GM12878 (cell line): ENCODE measurements at regions of chr6 and their contacts with region 1.

Region 1: GRCh38 chr6:111804627-111805235 is 68.5 kb downstream of the FYN start:
- DNase-seq: peak; percentile 84
- ATAC-seq: peak; percentile 77
- H3K4me3 ChIP-seq: no peak overlapping the region
- H3K27ac ChIP-seq: peak overlapping the region; percentile 70
- H3K4me1 ChIP-seq: peaks cover 70% of the 10 kb centered on the region
- H3K27me3 ChIP-seq: no peaks in the 10 kb centered on the region
- CTCF ChIP-seq: peak in 2 of 3 experiments; percentile 24 to 35; a peak in 2 of 6 replicates
- EP300 ChIP-seq: peak; percentile 65 to 88; a peak in 2 of 4 replicates
- POLR2A ChIP-seq: no peak
- RAD21 ChIP-seq: peak; percentile 62

Region 2: DNA sequence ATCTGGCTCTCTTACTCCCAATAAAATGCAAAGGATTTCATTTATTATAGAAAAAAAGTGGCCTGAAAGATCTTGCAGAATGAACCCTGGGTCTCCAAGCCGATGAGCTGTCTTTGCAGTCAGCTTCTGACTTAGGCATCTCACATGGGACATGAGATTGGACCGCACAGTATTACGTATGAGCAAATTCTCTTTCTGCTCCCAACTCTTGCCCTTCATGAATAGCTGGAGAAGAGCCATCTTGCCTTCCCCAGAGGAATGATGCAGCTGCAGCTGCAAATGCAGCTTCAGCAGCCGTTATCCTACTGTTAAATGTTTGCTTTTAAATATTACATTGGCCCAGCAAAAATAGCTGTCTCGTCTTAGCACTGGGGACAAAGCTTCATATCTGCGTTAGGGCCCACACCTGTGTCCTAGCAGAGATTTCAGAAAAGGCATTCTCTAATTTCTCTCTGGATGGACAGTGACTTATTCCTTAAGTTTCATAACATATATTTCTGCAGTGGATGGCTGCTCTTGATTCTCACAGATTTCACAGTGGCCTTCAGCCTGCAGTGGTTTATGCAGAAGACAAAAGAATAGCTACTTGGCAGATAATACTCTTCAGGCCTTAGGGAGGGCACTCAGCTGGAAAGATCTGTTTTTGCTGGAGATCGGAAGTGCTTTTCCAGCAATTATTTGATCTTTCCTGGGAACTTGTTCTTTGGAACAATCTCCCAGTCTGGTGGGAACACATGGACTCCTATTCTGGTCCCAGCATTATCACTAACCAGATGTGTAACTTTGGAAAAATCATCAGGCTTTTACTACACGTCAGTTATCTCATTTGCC is 60.7 kb before region 1 on chr6:
- CTCF ChIA-PET with region 1: interaction called, 6 read pairs
- POLR2A ChIA-PET with region 1: interaction called, 3 read pairs
- RAD21 ChIA-PET with region 1: interaction called, 15 read pairs
- SMC1A ChIA-PET with region 1: interaction called, 9 read pairs
- in situ Hi-C with region 1: no loop called
- intact Hi-C with region 1: loop called (anchors 1 kb)
- DNase-seq: no peak
- ATAC-seq: no peak
- H3K4me3 ChIP-seq: no peak overlapping the region
- H3K27ac ChIP-seq: no peak overlapping the region
- H3K4me1 ChIP-seq: peaks cover 58% of the 10 kb centered on the region
- H3K27me3 ChIP-seq: no peaks in the 10 kb centered on the region
- CTCF ChIP-seq: no peak
- EP300 ChIP-seq: no peak
- POLR2A ChIP-seq: no peak
- RAD21 ChIP-seq: no peak

Region 3: DNA sequence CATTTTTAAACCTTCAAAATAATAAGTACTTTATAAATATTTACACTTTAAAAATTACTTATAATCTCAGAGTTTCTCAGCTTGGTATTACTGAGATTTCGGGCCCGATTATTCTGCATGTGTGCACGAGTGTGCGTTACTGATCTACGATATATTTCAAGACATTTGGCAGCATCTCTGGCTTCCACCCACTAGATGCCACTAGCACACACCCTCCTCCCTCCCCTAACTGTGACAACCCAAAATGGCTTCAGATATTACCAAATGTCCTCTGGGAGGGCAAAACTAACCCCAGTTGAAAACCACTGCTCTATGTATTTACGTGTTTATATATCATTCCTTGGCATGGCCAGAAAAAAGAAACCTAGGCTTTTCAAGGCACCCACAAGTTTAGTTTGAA is 27.4 kb before region 1 on chr6:
- CTCF ChIA-PET with region 1: interaction called, 11 read pairs
- POLR2A ChIA-PET with region 1: interaction called, 5 read pairs
- RAD21 ChIA-PET with region 1: interaction called, 10 read pairs
- SMC1A ChIA-PET with region 1: interaction called, 27 read pairs
- in situ Hi-C with region 1: no loop called
- intact Hi-C with region 1: no loop called
- DNase-seq: no peak
- ATAC-seq: peak; percentile 82
- H3K4me3 ChIP-seq: no peak overlapping the region
- H3K27ac ChIP-seq: peak overlapping the region; percentile 61
- H3K4me1 ChIP-seq: peaks cover 22% of the 10 kb centered on the region
- H3K27me3 ChIP-seq: no peaks in the 10 kb centered on the region
- CTCF ChIP-seq: peak; percentile 39 to 50 (median 43); a peak in 4 of 6 replicates
- EP300 ChIP-seq: no peak
- POLR2A ChIP-seq: no peak
- RAD21 ChIP-seq: peak; percentile 72

Region 4: GRCh38 chr6:111818539-111819226 is 14.0 kb after region 1 on chr6:
- CTCF ChIA-PET with region 1: interaction called, 9 read pairs
- POLR2A ChIA-PET with region 1: interaction called, 16 read pairs
- RAD21 ChIA-PET with region 1: interaction called, 18 read pairs
- SMC1A ChIA-PET with region 1: interaction called, 71 read pairs
- in situ Hi-C with region 1: no loop called
- intact Hi-C with region 1: no loop called
- DNase-seq: no peak
- ATAC-seq: peak; percentile 31
- H3K4me3 ChIP-seq: no peak overlapping the region
- H3K27ac ChIP-seq: no peak overlapping the region; the same call in 1 of the 2 replicates
- H3K4me1 ChIP-seq: peaks cover 16% of the 10 kb centered on the region
- H3K27me3 ChIP-seq: no peaks in the 10 kb centered on the region
- CTCF ChIP-seq: no peak
- EP300 ChIP-seq: no peak
- POLR2A ChIP-seq: no peak
- RAD21 ChIP-seq: no peak

Region 5: DNA sequence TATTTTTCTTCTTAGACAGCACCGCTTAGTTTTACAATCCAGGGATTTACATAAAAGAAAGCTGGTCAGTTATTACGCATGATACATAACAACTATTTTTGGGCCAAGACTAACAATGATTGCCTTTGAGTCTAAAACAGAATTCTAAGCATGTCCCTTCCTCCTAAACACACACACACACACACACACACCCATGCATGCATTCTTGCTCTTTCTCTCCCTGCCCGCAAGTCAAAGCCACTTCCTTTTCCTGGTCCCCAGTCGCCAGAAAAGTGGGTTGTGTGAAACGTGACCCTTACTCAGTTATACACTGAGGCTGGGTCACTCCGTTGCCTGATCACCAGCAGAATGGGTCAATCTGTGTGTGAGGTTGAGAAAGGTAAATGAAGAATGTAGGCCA is 37.1 kb after region 1 on chr6:
- CTCF ChIA-PET with region 1: interaction called, 36 read pairs
- POLR2A ChIA-PET with region 1: interaction called, 5 read pairs
- RAD21 ChIA-PET with region 1: interaction called, 58 read pairs
- SMC1A ChIA-PET with region 1: interaction called, 91 read pairs
- in situ Hi-C with region 1: no loop called
- intact Hi-C with region 1: loop called (anchors 2 kb)
- DNase-seq: peak; percentile 60
- ATAC-seq: no peak
- H3K4me3 ChIP-seq: no peak overlapping the region; the same call in 1 of the 2 replicates
- H3K27ac ChIP-seq: peak overlapping the region; percentile 72
- H3K4me1 ChIP-seq: peaks cover 82% of the 10 kb centered on the region
- H3K27me3 ChIP-seq: no peaks in the 10 kb centered on the region
- CTCF ChIP-seq: no peak
- EP300 ChIP-seq: peak; percentile 36 to 52; a peak in 2 of 4 replicates
- POLR2A ChIP-seq: no peak
- RAD21 ChIP-seq: no peak

Region 6: GRCh38 chr6:111873178-111874024 is 68.7 kb after region 1 on chr6 and contains the start of gene FYN:
- CTCF ChIA-PET with region 1: interaction called, 6 read pairs
- POLR2A ChIA-PET with region 1: interaction called, 8 read pairs
- RAD21 ChIA-PET with region 1: interaction called, 16 read pairs
- SMC1A ChIA-PET with region 1: interaction called, 65 read pairs
- in situ Hi-C with region 1: no loop called
- intact Hi-C with region 1: loop called (anchors 2 kb)
- DNase-seq: peak; percentile 76
- ATAC-seq: peak; percentile 92
- H3K4me3 ChIP-seq: peak within 1 kb of the TSS; percentile 98
- H3K27ac ChIP-seq: peak within 1 kb of the TSS; percentile 76
- H3K4me1 ChIP-seq: peaks cover 5% of the 10 kb centered on the region
- H3K27me3 ChIP-seq: no peaks in the 10 kb centered on the region
- CTCF ChIP-seq: peak; percentile 28 to 65 (median 30); a peak in 5 of 6 replicates
- EP300 ChIP-seq: no peak
- POLR2A ChIP-seq: peak; percentile 95
- RAD21 ChIP-seq: peak; percentile 48
- polyA plus RNA-seq, gene FYN: 51.4 to 55.1 TPM